MCF 10A (cell line): ENCODE measurements at regions of chr11 and their contacts with region 1.

Region 1: DNA sequence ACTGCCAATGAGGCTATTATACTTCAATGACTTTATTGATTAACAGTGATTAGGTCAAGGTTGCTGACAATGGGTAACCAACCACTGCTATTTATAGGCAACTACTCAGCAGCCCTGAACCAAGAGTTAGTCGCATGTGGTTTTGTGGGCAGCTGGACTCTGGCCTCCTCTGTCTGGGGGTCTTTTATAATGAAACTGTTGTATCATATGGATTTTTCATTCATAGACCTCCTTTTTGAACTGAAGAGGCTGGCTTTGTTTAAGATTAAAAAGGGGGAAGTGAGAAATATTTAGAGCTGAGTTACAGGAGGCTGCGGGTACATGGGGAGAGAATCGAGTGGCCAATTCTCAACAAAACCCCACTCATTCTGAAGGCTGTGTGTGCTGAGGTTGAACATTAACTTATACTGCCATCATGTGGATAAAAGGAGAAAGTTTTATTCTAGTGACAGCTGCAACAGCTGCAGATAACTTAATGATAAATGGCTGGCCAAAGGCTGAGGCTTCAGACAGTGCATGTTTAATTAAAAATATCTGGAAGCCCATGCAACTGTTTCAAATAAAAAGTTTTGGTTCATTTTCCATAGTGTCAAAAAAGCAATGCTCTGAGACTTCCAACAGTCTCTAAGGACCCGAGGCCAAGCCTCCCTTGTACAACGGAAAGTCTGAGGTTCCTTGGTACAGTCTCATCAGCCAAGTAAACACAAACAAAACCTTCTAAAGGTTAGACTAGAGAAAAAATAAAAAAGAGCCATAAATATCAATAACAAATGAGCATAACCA is 682.6 kb downstream of the KCNA4 start:
- DNase-seq: peak; percentile 56
- H3K4me3 Mint-ChIP-seq: no peak overlapping the region
- H3K27ac Mint-ChIP-seq: no peak overlapping the region
- H3K4me1 Mint-ChIP-seq: peaks cover 3% of the 10 kb centered on the region
- H3K27me3 Mint-ChIP-seq: no peaks in the 10 kb centered on the region
- CTCF ChIP-seq: peak; percentile 50

Region 2: GRCh38 chr11:27497284-27497866 is 1836.8 kb before region 1 on chr11:
- CTCF ChIA-PET with region 1: interaction called, 4 read pairs
- POLR2A ChIA-PET with region 1: no interaction called
- intact Hi-C with region 1: loop called (anchors 5 kb)
- DNase-seq: peak; percentile 29
- H3K4me3 Mint-ChIP-seq: no peak overlapping the region
- H3K27ac Mint-ChIP-seq: no peak overlapping the region
- H3K4me1 Mint-ChIP-seq: peaks cover 8% of the 10 kb centered on the region
- H3K27me3 Mint-ChIP-seq: no peaks in the 10 kb centered on the region
- CTCF ChIP-seq: peak; percentile 29

Region 3: GRCh38 chr11:28697920-28698827 is 636.0 kb before region 1 on chr11:
- CTCF ChIA-PET with region 1: interaction called, 9 read pairs
- POLR2A ChIA-PET with region 1: no interaction called
- intact Hi-C with region 1: loop called (anchors 10 kb)
- DNase-seq: peak; percentile 79
- H3K4me3 Mint-ChIP-seq: no peak overlapping the region
- H3K27ac Mint-ChIP-seq: peak overlapping the region; percentile 36
- H3K4me1 Mint-ChIP-seq: peaks cover 41% of the 10 kb centered on the region
- H3K27me3 Mint-ChIP-seq: no peaks in the 10 kb centered on the region
- CTCF ChIP-seq: peak; percentile 76

Region 4: DNA sequence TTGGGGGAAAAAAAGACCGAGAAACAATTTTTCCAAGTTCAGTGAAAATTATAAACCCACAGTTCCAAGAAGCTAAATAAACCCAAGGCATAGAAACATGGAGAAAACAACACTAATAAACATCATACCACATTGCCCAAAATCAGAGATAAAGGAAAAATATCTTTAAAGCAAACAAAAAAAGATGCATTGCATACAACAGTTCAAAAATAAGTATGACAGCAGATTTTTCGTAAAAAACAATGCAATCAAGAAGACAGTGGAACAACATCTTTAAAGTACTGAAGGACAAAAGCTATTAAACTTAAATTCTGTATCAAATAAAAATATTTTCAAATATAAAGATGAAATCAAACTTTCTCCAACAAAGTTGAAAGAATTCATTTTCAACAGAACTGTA is 304.7 kb before region 1 on chr11:
- CTCF ChIA-PET with region 1: no interaction called
- POLR2A ChIA-PET with region 1: no interaction called
- intact Hi-C with region 1: no loop called
- DNase-seq: peak; percentile 5
- H3K4me3 Mint-ChIP-seq: no peak overlapping the region
- H3K27ac Mint-ChIP-seq: no peak overlapping the region
- H3K4me1 Mint-ChIP-seq: no peaks in the 10 kb centered on the region
- H3K27me3 Mint-ChIP-seq: no peaks in the 10 kb centered on the region
- CTCF ChIP-seq: no peak

Region 5: DNA sequence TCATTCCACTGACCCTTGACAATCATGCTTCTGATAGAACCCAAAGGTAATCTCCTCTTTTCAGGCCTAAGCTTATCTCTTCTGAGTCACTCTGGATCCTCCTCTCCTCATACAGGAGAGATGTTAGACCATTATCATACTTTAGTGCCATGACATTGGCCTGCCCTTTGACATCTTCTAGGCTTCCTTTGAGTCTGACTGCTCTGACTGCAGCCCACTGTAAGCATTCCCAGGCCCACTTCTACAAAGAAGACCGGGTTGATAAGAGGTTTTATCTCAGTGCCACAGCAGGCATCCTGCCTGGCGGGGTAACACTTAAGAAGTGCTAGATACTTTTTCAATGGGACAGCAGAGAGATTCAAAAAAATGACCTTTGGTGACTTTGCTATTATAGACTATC is 244.6 kb after region 1 on chr11:
- CTCF ChIA-PET with region 1: no interaction called
- POLR2A ChIA-PET with region 1: no interaction called
- intact Hi-C with region 1: no loop called
- DNase-seq: no peak
- H3K4me3 Mint-ChIP-seq: no peak overlapping the region
- H3K27ac Mint-ChIP-seq: no peak overlapping the region
- H3K4me1 Mint-ChIP-seq: no peaks in the 10 kb centered on the region
- H3K27me3 Mint-ChIP-seq: no peaks in the 10 kb centered on the region
- CTCF ChIP-seq: no peak